ENCODE measurements at regions of chr9 and their contacts with region 1.

Region 1: GRCh38 chr9:31119882-31120454 is 1264.5 kb upstream of the ACO1 start:
- DNase-seq: peak; percentile 46
- H3K4me3 ChIP-seq: no peak overlapping the region
- H3K27ac ChIP-seq: no peak overlapping the region
- H3K4me1 ChIP-seq: no peaks in the 10 kb centered on the region
- H3K27me3 ChIP-seq: no peaks in the 10 kb centered on the region
- CTCF ChIP-seq: peak; percentile 58

Region 2: GRCh38 chr9:31304576-31304975 is 184.6 kb after region 1 on chr9:
- CTCF ChIA-PET with region 1: no interaction called
- POLR2A ChIA-PET with region 1: no interaction called
- intact Hi-C with region 1: loop called (anchors 10 kb)
- DNase-seq: peak; percentile 35
- H3K4me3 ChIP-seq: no peak overlapping the region
- H3K27ac ChIP-seq: no peak overlapping the region
- H3K4me1 ChIP-seq: no peaks in the 10 kb centered on the region
- H3K27me3 ChIP-seq: no peaks in the 10 kb centered on the region
- CTCF ChIP-seq: no peak

Region 3: DNA sequence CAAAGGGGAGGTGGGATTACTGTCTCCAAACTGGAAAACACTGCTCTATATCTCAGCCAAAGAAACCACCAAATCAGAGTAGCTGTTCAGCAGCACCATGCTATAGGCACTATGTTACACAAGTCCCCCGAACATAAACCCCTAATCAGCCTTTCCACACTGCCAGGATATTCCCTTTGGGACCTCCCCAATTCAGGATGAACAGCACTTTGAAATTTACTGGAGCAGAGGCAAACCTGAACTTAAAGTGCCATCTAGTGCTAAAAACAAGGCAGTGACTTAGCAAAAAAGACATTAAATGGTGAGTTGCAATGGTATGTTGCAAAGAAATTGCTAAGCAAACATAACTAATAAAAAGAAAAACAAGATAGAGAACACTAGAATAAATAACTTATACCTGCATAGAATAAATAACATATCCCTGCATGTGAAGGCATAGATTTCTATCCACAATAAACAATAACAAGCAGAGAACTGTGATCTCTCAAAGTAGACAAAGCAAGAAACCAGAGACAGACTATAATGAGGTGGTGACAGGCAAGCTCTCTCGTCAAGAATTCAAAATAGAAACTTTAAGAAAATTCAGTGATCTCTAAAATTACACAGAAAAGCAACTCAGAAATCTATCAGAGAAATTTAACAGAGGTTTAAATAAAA is 680.1 kb after region 1 on chr9:
- CTCF ChIA-PET with region 1: no interaction called
- POLR2A ChIA-PET with region 1: no interaction called
- intact Hi-C with region 1: loop called (anchors 5 kb)
- DNase-seq: peak; percentile 76
- H3K4me3 ChIP-seq: no peak overlapping the region
- H3K27ac ChIP-seq: no peak overlapping the region
- H3K4me1 ChIP-seq: no peaks in the 10 kb centered on the region
- H3K27me3 ChIP-seq: no peaks in the 10 kb centered on the region
- CTCF ChIP-seq: peak; percentile 74

Region 4: GRCh38 chr9:32251539-32251938 is 1131.6 kb after region 1 on chr9:
- CTCF ChIA-PET with region 1: no interaction called
- POLR2A ChIA-PET with region 1: no interaction called
- intact Hi-C with region 1: loop called (anchors 10 kb)
- DNase-seq: peak; percentile 65
- H3K4me3 ChIP-seq: no peak overlapping the region
- H3K27ac ChIP-seq: no peak overlapping the region
- H3K4me1 ChIP-seq: no peaks in the 10 kb centered on the region
- H3K27me3 ChIP-seq: no peaks in the 10 kb centered on the region
- CTCF ChIP-seq: peak; percentile 85

Measured in A673 (cell line).